ENCODE measurements at regions of chr1 and their contacts with region 1.

Region 1: DNA sequence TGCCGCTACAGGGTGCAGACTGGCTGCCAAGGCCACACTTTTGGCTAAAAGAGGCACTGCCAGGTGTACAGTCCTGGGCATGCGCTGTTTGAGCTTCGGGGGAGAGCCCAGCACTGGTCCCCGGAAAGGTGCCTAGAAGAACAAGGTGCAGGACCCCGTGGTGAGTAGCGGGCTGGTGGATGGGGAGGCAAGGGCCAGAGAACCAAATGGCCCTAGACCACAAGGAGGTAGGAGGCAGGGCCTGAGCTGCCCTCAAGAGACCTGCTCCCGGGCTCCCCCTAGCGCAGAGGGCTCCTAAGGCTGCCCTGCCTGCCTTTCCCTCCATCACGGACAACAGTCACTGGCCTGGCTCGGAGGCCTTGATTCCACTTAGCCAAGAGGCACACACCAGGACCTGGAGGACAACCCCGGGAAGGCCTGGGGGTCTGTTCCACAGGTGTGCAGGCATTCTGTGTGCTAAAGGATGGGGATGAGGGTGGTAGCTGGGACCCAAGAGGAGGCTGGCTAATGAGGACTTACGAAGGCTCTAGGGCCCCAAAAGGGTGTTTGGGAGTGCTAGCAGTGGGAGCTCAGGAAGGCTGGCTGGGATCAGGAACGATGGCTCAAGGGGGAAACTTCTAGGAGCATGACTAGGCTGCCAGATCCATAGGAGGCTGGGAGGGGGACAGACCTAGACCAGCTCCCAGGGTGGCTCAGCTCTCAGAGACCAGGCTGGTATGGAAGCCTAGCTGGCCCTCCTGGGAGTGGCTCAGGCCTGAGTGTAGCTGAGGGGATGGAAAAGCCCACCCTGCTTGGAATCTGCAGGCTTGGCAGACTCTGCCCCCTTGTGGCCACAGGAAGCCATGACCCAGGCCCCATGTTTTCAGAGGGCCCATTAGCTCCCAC is 742 bp downstream of the ARTN start:
- DNase-seq: peak; percentile 26 to 63 (median 38)
- H3K4me3 ChIP-seq: no peak overlapping the region
- H3K4me3 Mint-ChIP-seq: peak overlapping the region in 1 of 7 donors; percentile 8
- H3K27ac ChIP-seq: no peak overlapping the region
- H3K27ac Mint-ChIP-seq: peak overlapping the region in 1 of 8 donors; percentile 33
- H3K4me1 ChIP-seq: no peaks in the 10 kb centered on the region
- H3K4me1 Mint-ChIP-seq: peaks cover 6 to 21% (median 11%) of the 10 kb centered on the region in 3 donors
- H3K27me3 ChIP-seq: peaks cover 21% of the 10 kb centered on the region
- H3K27me3 Mint-ChIP-seq: peaks cover 23 to 29% of the 10 kb centered on the region in 2 donors

Region 2: GRCh38 chr1:43529206-43529731 is 405.1 kb before region 1 on chr1:
- CTCF ChIA-PET with region 1: interaction called, 35 read pairs
- POLR2A ChIA-PET with region 1: no interaction called
- DNase-seq: peak; percentile 60 to 84 (median 70)
- H3K4me3 ChIP-seq: no peak overlapping the region
- H3K4me3 Mint-ChIP-seq: peak overlapping the region; percentile 35 to 73 (median 54)
- H3K27ac ChIP-seq: no peak overlapping the region
- H3K27ac Mint-ChIP-seq: peak overlapping the region in 1 of 8 donors; percentile 64
- H3K4me1 ChIP-seq: peaks cover 16% of the 10 kb centered on the region
- H3K4me1 Mint-ChIP-seq: peaks cover 20 to 28% (median 24%) of the 10 kb centered on the region in 3 donors
- H3K27me3 ChIP-seq: peaks cover 24% of the 10 kb centered on the region
- H3K27me3 Mint-ChIP-seq: peaks cover 31 to 68% of the 10 kb centered on the region in 2 donors

Region 3: DNA sequence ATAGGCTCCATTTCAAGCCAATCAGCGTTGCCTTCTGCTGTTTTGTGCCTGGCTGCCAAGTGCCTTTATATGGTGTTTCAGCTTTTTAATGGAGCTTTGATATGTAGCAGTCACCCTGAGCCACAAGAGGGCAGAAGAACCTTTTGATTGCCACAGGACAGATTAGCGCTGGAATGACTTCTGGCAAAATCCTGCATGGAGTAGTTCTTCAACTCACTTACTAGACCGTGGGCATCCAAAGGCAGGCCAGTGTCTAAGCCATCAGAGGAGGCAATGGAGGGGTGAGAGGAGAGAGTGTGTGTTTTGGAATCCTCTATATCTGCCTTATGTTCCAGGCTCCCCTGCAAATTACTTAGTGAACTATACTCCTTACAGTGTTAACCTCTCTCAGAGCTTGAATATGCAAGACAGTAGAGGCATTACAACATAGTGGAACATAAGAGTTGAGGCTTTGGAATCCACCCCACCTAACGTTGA is 170.8 kb before region 1 on chr1:
- CTCF ChIA-PET with region 1: interaction called, 45 read pairs
- POLR2A ChIA-PET with region 1: no interaction called
- DNase-seq: peak; percentile 7 to 51 (median 27)
- H3K4me3 ChIP-seq: no peak overlapping the region
- H3K4me3 Mint-ChIP-seq: no peak overlapping the region
- H3K27ac ChIP-seq: no peak overlapping the region
- H3K27ac Mint-ChIP-seq: no peak overlapping the region
- H3K4me1 ChIP-seq: no peaks in the 10 kb centered on the region
- H3K4me1 Mint-ChIP-seq: peaks cover 4 to 7% (median 6%) of the 10 kb centered on the region in 3 donors
- H3K27me3 ChIP-seq: no peaks in the 10 kb centered on the region
- H3K27me3 Mint-ChIP-seq: no peaks in the 10 kb centered on the region

Region 4: GRCh38 chr1:43946236-43947060 is 12.1 kb after region 1 on chr1 and contains the start of gene IPO13:
- CTCF ChIA-PET with region 1: interaction called, 46 read pairs
- POLR2A ChIA-PET with region 1: no interaction called
- DNase-seq: peak; percentile 91 to 96 (median 96)
- H3K4me3 ChIP-seq: peak within 1 kb of the TSS; percentile 83
- H3K4me3 Mint-ChIP-seq: peak within 1 kb of the TSS; percentile 83 to 94 (median 90)
- H3K27ac ChIP-seq: peak within 1 kb of the TSS; percentile 95
- H3K27ac Mint-ChIP-seq: peak within 1 kb of the TSS; percentile 67 to 99 (median 94)
- H3K4me1 ChIP-seq: peaks cover 26% of the 10 kb centered on the region
- H3K4me1 Mint-ChIP-seq: peaks cover 45 to 66% (median 47%) of the 10 kb centered on the region in 3 donors
- H3K27me3 ChIP-seq: no peaks in the 10 kb centered on the region
- H3K27me3 Mint-ChIP-seq: no peaks in the 10 kb centered on the region
- total RNA-seq, gene IPO13: 28.9 to 32.1 TPM